Activated CD4-positive, alpha-beta T cell treated with anti-CD3 and anti-CD28 coated beads, Interleukin-2, amount 10 ng/mL, durations not matched to agents 7 days and 5 days (primary cell): ENCODE measurements at regions of chr7 and their contacts with region 1.

Region 1: DNA sequence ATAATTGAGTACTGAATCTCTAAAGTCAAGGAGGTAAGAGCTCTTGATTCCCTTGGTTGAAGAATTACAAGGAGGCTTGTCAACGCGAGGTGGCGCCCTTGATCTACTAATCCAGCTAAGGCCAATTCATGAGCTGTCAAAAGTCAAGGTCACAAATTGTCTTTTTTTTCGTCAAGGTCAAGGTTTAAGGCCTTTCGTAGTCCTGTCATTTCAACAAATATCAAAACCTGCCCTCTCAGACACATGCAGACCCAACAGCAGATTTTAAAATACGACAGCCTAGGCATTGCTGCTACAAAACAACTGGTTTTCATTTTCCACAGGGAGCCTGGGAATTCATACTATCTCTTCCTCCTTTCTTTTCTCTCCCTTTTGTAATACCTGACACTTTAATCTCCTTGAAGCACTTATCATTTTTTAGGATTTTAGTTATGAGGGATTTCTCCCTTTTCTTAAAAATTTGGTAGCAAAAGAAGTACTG is 3.6 kb downstream of the HOXA13 start:
- DNase-seq: peak; percentile 86
- H3K4me3 Mint-ChIP-seq: no peak overlapping the region
- H3K27ac Mint-ChIP-seq: no peak overlapping the region
- H3K4me1 Mint-ChIP-seq: peaks cover 16% of the 10 kb centered on the region
- H3K27me3 Mint-ChIP-seq: peaks cover 84% of the 10 kb centered on the region

Region 2: GRCh38 chr7:27184337-27185012 is 11.9 kb before region 1 on chr7:
- CTCF ChIA-PET with region 1: interaction called, 18 read pairs
- POLR2A ChIA-PET with region 1: interaction called, 3 read pairs
- DNase-seq: no peak
- H3K4me3 Mint-ChIP-seq: peak overlapping the region; percentile 47
- H3K27ac Mint-ChIP-seq: peak overlapping the region; percentile 69
- H3K4me1 Mint-ChIP-seq: peaks cover 41% of the 10 kb centered on the region
- H3K27me3 Mint-ChIP-seq: peaks cover 77% of the 10 kb centered on the region

Region 3: GRCh38 chr7:27303026-27303425 is 106.7 kb after region 1 on chr7:
- CTCF ChIA-PET with region 1: no interaction called
- POLR2A ChIA-PET with region 1: no interaction called
- DNase-seq: no peak
- H3K4me3 Mint-ChIP-seq: no peak overlapping the region
- H3K27ac Mint-ChIP-seq: no peak overlapping the region
- H3K4me1 Mint-ChIP-seq: no peaks in the 10 kb centered on the region
- H3K27me3 Mint-ChIP-seq: peaks cover 10% of the 10 kb centered on the region